Tibial artery (tissue), 4 donors: ENCODE measurements at regions of chr1 and their contacts with region 1.

Region 1: GRCh38 chr1:115753830-115754229 is 14.7 kb downstream of the CASQ2 start:
- DNase-seq: peak; percentile 26 to 72
- H3K4me3 ChIP-seq: no peak overlapping the region
- H3K27ac ChIP-seq: peak overlapping the region; percentile 82 to 85
- H3K4me1 ChIP-seq: peaks cover 0 to 90% (median 55%) of the 10 kb centered on the region in 4 donors
- H3K27me3 ChIP-seq: no peaks in the 10 kb centered on the region
- CTCF ChIP-seq: no peak

Region 2: GRCh38 chr1:115717541-115717940 is 36.3 kb before region 1 on chr1:
- intact Hi-C with region 1: loop called (anchors 5 kb)
- DNase-seq: peak in 1 of 2 donors; percentile 55
- H3K4me3 ChIP-seq: no peak overlapping the region
- H3K27ac ChIP-seq: no peak overlapping the region
- H3K4me1 ChIP-seq: peaks cover 0 to 3% (median 0%) of the 10 kb centered on the region in 4 donors
- H3K27me3 ChIP-seq: no peaks in the 10 kb centered on the region
- CTCF ChIP-seq: peak; percentile 63 to 69